ENCODE measurements at regions of chr5 and their contacts with region 1.

Region 1: DNA sequence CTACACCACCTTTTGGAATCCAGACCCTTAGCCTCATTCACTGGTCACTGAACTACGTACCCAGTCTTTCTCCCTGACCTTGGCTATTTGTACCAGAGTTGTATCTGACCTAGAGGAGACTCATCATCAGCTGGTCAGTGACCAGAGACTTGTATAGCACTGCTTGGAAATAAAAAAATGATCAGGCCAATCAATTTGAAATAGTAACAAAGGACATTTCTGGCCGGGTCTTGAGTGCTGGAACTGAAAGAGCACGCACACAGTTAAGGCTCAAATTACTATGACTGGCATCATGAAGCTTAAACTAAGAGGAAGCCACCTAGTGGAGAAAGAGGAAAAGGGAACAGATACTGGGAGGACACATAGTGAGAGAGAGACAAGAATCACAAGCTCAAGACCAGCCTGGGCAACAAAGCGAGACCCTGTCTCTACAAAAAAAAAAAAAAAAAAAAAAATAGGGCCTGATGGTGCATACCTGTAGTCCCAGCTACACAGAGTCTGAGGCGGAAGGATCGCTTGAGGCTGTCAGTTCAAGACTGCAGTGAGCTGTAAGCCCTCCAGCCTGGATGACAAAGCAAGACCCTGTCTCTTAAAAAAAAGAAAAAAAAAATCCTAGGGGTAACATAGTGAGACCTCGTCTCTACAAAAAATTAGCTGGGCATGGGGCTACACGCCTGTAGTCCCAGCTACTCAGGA is 12.8 kb upstream of the SRP19 start:
- DNase-seq: no peak
- ATAC-seq: peak; percentile 97
- H3K4me3 Mint-ChIP-seq: no peak overlapping the region
- H3K27ac Mint-ChIP-seq: no peak overlapping the region
- H3K4me1 Mint-ChIP-seq: peaks cover 4% of the 10 kb centered on the region
- H3K27me3 Mint-ChIP-seq: peaks cover 9% of the 10 kb centered on the region

Region 2: GRCh38 chr5:112551419-112552032 is 296.7 kb before region 1 on chr5:
- CTCF ChIA-PET with region 1: interaction called, 10 read pairs
- POLR2A ChIA-PET with region 1: no interaction called
- DNase-seq: peak; percentile 56
- ATAC-seq: peak; percentile 51
- H3K4me3 Mint-ChIP-seq: no peak overlapping the region
- H3K27ac Mint-ChIP-seq: no peak overlapping the region
- H3K4me1 Mint-ChIP-seq: no peaks in the 10 kb centered on the region
- H3K27me3 Mint-ChIP-seq: peaks cover 7% of the 10 kb centered on the region

Region 3: DNA sequence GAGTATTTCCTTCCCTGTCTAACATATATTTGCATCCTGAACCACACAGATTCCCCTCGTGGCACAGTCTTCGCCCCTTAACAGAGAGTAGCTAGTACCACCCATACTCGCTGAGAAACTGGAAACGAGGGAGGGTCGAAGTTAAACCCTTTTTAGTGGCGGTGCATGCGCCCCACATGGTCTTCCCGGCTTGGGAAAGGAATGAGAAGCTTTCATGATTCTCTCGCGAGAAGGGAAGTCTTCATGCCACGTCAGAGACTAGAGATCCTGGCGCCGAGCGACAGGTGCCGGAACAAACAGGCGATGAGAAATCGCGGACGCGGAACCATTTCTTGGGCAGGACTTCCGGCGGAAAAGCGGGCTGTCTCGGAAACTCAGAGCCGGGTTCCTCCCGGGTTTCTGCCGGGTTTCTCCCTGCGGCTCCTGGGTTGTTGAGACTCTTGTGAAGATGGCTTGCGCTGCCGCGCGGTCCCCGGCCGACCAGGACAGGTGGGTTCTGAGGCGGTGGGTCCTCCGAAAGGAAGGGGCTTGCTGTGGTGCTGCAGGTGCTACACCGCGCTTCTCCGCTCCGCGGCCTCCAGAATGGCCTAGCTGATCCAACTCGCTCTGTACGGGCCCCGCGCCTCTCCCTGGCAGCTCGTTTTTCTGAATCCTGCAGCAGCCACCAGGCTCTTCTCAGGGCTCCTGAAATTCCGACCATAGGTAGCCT is 12.8 kb after region 1 on chr5 and contains the start of gene SRP19:
- CTCF ChIA-PET with region 1: interaction called, 24 read pairs
- POLR2A ChIA-PET with region 1: interaction called, 5 read pairs
- DNase-seq: peak; percentile 95
- ATAC-seq: peak; percentile 97
- H3K4me3 Mint-ChIP-seq: peak within 1 kb of the TSS; percentile 95
- H3K27ac Mint-ChIP-seq: peak within 1 kb of the TSS; percentile 93
- H3K4me1 Mint-ChIP-seq: peaks cover 32% of the 10 kb centered on the region
- H3K27me3 Mint-ChIP-seq: peaks cover 18% of the 10 kb centered on the region
- total RNA-seq, gene SRP19: 51.2 to 56.6 TPM

Region 4: DNA sequence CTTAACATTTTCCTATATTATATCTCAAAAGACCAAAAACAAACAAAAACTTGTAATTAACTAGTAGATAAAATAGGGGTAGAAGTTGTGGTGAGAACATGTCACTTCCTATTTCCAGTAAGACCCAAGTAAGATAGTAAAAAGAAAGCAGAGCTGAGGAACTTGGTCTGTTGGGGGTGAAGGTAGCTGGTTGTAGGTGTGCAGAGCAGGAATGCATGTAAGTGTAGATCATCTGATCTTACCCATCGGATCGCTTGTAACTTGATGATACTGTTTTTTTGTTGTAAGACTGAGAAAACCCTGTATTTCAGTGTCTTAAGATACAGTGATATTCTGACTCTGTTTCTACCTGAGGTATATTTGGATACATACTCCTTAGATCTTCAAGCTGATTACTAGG is 18.5 kb after region 1 on chr5:
- CTCF ChIA-PET with region 1: interaction called, 22 read pairs
- POLR2A ChIA-PET with region 1: no interaction called
- DNase-seq: no peak
- ATAC-seq: peak; percentile 50
- H3K4me3 Mint-ChIP-seq: no peak overlapping the region
- H3K27ac Mint-ChIP-seq: peak overlapping the region; percentile 64
- H3K4me1 Mint-ChIP-seq: peaks cover 61% of the 10 kb centered on the region
- H3K27me3 Mint-ChIP-seq: no peaks in the 10 kb centered on the region

Measured in activated CD8-positive, alpha-beta T cell treated with anti-CD3 and anti-CD28 coated beads, Interleukin-2, amount 10 ng/mL, durations not matched to agents 7 days and 5 days (primary cell).